ENCODE measurements at regions of chr19 and their contacts with region 1.

Region 1: DNA sequence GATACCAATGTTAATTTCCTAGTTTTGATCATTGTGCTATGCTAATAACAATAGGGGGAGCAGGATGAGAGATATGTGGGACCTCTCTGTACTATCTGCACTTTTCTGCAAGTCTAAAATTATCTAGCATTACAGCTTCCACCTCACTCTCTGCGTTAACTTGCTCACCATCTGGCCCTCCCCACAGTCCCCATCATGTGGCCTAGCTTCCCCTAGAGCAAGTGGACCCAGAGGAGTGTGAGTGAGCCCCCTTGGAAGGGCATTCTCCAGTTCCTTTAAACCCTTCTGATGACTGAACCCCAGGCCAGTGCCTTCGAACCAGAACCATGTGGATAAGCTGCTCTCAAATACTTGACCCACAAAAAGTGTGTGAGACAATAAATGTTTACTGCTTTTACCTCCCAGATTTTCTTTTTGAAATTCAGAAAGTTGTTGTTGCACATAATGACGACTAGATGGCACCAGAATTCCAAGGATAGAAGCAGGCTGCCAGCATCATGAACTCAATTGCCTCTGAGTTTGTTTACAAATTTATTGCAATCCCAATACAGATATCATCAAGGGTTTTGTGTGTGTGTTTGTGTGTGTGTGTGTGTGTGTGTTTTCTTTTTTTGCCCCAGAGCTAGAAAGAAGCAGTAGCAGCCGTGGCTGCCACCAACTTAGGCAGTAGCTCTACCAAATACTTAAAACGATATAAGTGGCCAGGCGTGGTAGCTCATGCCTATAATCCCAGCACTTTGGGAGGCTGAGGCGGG is 49.0 kb upstream of the ZNF780A start:
- DNase-seq: peak; percentile 64 to 77 (median 74)
- H3K4me3 ChIP-seq: no peak overlapping the region
- H3K27ac ChIP-seq: no peak overlapping the region
- H3K4me1 ChIP-seq: peaks cover 9 to 19% (median 15%) of the 10 kb centered on the region in 4 experiments
- H3K27me3 ChIP-seq: peaks cover 0 to 3% (median 2%) of the 10 kb centered on the region in 5 experiments

Region 2: GRCh38 chr19:40090241-40091204 is 49.2 kb before region 1 on chr19 and contains the start of gene ZNF780A:
- CTCF ChIA-PET with region 1: no interaction called
- POLR2A ChIA-PET with region 1: no interaction called
- DNase-seq: peak; percentile 74 to 94 (median 90)
- H3K4me3 ChIP-seq: peak within 1 kb of the TSS; percentile 78 to 93 (median 89)
- H3K27ac ChIP-seq: peak within 1 kb of the TSS; percentile 86 to 96
- H3K4me1 ChIP-seq: peaks cover 4 to 20% (median 14%) of the 10 kb centered on the region in 4 experiments
- H3K27me3 ChIP-seq: peaks cover 0 to 8% (median 0%) of the 10 kb centered on the region in 5 experiments

Region 3: DNA sequence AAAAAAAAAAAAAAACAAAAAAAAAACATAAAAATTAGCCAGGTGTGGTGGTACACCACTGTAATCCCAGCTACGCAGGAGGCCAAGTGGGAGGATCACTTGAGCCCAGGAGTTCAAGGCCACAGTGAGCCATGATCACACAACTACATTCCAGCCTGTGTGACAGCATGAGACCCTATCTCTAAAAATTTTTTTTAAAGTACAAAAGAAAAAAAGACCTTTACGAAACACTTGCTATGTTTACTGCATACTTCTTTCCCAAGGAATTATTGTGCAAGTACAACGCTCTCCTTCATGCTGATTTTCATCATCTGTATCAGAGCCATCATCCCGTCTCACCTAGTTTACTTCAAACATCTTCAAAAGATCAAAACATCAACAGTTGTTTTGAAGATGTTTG is 20.3 kb before region 1 on chr19:
- CTCF ChIA-PET with region 1: no interaction called
- POLR2A ChIA-PET with region 1: no interaction called
- DNase-seq: no peak
- H3K4me3 ChIP-seq: no peak overlapping the region
- H3K27ac ChIP-seq: no peak overlapping the region
- H3K4me1 ChIP-seq: no peaks in the 10 kb centered on the region
- H3K27me3 ChIP-seq: peaks cover 0 to 9% (median 2%) of the 10 kb centered on the region in 5 experiments

Region 4: DNA sequence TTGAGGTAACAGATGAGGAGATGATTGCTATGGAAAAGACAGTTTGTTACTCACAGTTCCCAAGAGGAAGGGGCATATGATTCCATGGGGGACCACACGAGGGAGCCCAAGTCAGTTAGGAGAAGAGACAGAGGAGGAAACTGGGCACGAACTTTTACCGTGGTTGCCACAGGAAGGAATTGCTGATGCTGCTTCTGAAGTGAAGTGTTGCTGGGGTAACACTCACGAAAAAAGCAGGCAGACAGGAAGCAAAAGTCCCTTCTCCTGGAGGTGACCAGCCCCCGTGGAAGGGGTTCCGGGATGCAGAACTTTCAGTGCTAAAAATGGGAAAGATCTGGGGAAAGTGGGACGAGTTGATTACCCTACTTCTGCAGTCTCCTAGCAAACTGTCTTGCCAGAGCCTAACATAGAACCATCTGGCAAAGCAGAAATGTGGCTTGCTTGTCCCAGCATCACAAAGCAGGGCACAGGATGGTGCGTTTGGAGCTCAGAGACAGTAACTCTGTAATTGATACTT is 16.1 kb after region 1 on chr19:
- CTCF ChIA-PET with region 1: interaction called, 10 read pairs
- POLR2A ChIA-PET with region 1: interaction called, 3 read pairs
- DNase-seq: peak in 2 of 3 donors; percentile 26 to 38
- H3K4me3 ChIP-seq: no peak overlapping the region
- H3K27ac ChIP-seq: no peak overlapping the region
- H3K4me1 ChIP-seq: peaks cover 0 to 9% (median 3%) of the 10 kb centered on the region in 4 experiments
- H3K27me3 ChIP-seq: no peaks in the 10 kb centered on the region

Region 5: GRCh38 chr19:40165362-40165937 is 25.7 kb after region 1 on chr19:
- CTCF ChIA-PET with region 1: interaction called, 30 read pairs
- POLR2A ChIA-PET with region 1: no interaction called
- DNase-seq: peak; percentile 74 to 89 (median 87)
- H3K4me3 ChIP-seq: no peak overlapping the region
- H3K27ac ChIP-seq: no peak overlapping the region
- H3K4me1 ChIP-seq: peaks cover 2 to 28% (median 11%) of the 10 kb centered on the region in 4 experiments
- H3K27me3 ChIP-seq: no peaks in the 10 kb centered on the region

Region 6: GRCh38 chr19:40174092-40174491 is 34.4 kb after region 1 on chr19:
- CTCF ChIA-PET with region 1: interaction called, 12 read pairs
- POLR2A ChIA-PET with region 1: no interaction called
- DNase-seq: no peak
- H3K4me3 ChIP-seq: no peak overlapping the region
- H3K27ac ChIP-seq: no peak overlapping the region
- H3K4me1 ChIP-seq: peaks cover 0 to 2% (median 0%) of the 10 kb centered on the region in 4 experiments
- H3K27me3 ChIP-seq: peaks cover 0 to 2% (median 0%) of the 10 kb centered on the region in 5 experiments

Region 7: DNA sequence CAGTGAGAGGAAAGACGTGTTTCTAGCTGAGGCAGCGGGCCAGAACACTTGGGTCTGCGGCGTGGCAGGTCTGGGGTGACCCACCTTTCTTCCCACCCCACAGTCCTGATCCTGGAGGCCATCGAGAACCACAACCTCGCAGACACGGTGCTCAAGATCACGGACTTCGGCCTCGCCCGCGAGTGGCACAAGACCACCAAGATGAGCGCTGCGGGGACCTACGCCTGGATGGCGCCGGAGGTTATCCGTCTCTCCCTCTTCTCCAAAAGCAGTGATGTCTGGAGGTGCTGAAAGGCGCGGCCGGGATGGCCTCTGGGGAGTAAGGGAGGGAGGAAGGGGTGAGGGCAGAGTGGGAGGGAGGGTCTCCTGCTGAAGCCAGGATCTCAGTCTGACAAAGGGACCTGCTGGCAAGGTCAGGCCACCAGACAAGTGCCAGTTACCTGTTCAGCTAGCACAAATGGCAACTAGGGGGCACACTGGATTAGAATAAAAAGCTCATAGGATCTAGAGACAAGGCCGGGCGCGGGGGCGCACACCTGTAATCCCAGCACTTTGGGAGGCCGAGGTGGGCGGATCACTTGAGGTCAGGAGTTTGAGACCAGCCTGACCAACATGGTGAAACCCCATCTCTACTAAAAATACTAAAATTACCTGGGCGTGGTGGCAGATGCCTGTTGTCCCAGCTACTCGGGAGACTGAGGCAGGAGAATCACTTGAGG is 58.7 kb after region 1 on chr19:
- CTCF ChIA-PET with region 1: no interaction called
- POLR2A ChIA-PET with region 1: no interaction called
- DNase-seq: no peak
- H3K4me3 ChIP-seq: no peak overlapping the region
- H3K27ac ChIP-seq: no peak overlapping the region
- H3K4me1 ChIP-seq: no peaks in the 10 kb centered on the region
- H3K27me3 ChIP-seq: no peaks in the 10 kb centered on the region

Region 8: DNA sequence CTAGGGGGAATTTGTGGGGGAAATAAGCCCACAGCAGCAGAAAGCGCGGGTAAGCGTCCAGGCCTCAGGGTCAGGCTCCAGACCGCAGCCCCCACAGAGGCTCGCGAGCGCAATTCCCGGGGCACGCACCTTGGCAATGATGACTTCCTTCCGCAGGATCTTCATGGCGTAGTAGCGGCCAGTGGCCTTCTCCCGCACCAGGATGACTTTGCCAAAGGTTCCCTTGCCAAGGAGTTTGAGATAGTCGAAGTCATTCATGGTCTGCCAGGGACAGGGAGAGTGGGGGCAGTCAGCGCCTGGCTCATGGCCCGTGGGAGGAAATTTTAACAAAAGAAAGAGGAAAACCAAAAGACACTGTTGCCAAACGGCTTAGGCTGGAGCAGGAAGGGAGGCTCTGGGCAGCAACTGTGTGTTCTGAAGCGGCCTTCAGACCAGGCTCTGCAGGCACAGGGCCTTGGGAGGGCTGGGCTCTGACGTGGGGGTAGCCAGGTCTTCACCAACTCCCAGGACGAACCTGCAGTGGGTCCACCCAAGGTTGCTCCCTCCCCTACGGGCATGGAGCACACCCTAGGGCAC is 102.2 kb after region 1 on chr19:
- CTCF ChIA-PET with region 1: no interaction called
- POLR2A ChIA-PET with region 1: no interaction called
- DNase-seq: no peak
- H3K4me3 ChIP-seq: no peak overlapping the region
- H3K27ac ChIP-seq: no peak overlapping the region
- H3K4me1 ChIP-seq: no peaks in the 10 kb centered on the region
- H3K27me3 ChIP-seq: no peaks in the 10 kb centered on the region

Measured in common myeloid progenitor, CD34-positive (primary cell).